ENCODE measurements at regions of chr14 and their contacts with region 1.

Region 1: GRCh38 chr14:71320107-71320733 is 413.0 kb downstream of the PCNX1 start:
- DNase-seq: peak; percentile 98
- H3K4me3 ChIP-seq: peak within 1 kb of the TSS; percentile 94 to 98 (median 96)
- H3K27ac ChIP-seq: peak within 1 kb of the TSS; percentile 99
- H3K4me1 ChIP-seq: peaks cover 7 to 34% (median 28%) of the 10 kb centered on the region in 4 donors
- H3K27me3 ChIP-seq: no peaks in the 10 kb centered on the region
- CTCF ChIP-seq: no peak
- EP300 ChIP-seq: no peak
- POLR2A ChIP-seq: peak; percentile 81

Region 2: DNA sequence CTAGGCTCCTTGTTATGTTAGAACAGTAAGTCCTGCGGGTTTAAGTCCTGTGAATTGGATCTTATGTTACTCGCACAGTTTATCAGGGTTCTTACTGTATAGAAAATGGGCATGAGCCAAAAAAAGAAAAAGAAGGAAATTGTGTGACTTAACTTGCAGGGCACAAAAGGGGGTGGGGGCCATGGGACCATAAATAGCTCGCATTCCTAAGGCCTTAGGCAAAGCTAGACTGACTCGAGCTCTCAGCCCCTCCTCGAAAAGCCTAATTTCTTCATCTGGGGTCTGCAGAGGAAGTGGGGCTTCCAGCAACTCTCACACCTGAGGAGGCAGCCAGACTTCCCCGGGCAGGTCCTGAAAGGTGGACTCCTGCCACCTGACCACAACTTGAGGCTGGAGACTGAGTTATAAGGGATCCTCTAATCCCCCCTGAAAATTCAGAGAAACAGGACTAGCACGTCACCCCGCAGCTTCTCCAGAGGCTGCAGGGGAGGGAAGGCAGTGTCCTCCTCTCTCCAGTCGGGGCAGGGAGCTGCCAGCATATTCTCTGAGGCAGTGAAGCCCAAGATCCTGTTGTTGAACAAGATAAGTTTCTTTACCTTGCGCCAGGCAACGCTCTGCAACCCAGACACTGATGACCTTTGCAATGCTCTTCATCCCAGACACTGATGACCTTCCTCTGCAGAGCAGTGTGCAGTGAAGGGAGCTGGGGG is 132.4 kb before region 1 on chr14:
- intact Hi-C with region 1: no loop called
- DNase-seq: no peak
- H3K4me3 ChIP-seq: no peak overlapping the region
- H3K27ac ChIP-seq: no peak overlapping the region
- H3K4me1 ChIP-seq: no peaks in the 10 kb centered on the region
- H3K27me3 ChIP-seq: peaks cover 0 to 4% (median 0%) of the 10 kb centered on the region in 4 donors
- CTCF ChIP-seq: no peak
- EP300 ChIP-seq: no peak
- POLR2A ChIP-seq: no peak

Region 3: GRCh38 chr14:71403656-71404055 is 83.4 kb after region 1 on chr14:
- intact Hi-C with region 1: loop called (anchors 5 kb)
- DNase-seq: no peak
- H3K4me3 ChIP-seq: no peak overlapping the region
- H3K27ac ChIP-seq: no peak overlapping the region
- H3K4me1 ChIP-seq: peaks cover 0 to 21% (median 12%) of the 10 kb centered on the region in 4 donors
- H3K27me3 ChIP-seq: no peaks in the 10 kb centered on the region
- CTCF ChIP-seq: peak in 1 of 3 experiments; percentile 10
- EP300 ChIP-seq: no peak
- POLR2A ChIP-seq: no peak

Region 4: GRCh38 chr14:71586131-71586897 is 266.1 kb after region 1 on chr14:
- intact Hi-C with region 1: loop called (anchors 5 kb)
- DNase-seq: no peak
- H3K4me3 ChIP-seq: peak overlapping the region; percentile 31 to 55 (median 42)
- H3K27ac ChIP-seq: peak overlapping the region; percentile 37 to 65 (median 56)
- H3K4me1 ChIP-seq: peaks cover 10 to 37% (median 30%) of the 10 kb centered on the region in 4 donors
- H3K27me3 ChIP-seq: no peaks in the 10 kb centered on the region
- CTCF ChIP-seq: no peak
- EP300 ChIP-seq: no peak
- POLR2A ChIP-seq: no peak

Region 5: DNA sequence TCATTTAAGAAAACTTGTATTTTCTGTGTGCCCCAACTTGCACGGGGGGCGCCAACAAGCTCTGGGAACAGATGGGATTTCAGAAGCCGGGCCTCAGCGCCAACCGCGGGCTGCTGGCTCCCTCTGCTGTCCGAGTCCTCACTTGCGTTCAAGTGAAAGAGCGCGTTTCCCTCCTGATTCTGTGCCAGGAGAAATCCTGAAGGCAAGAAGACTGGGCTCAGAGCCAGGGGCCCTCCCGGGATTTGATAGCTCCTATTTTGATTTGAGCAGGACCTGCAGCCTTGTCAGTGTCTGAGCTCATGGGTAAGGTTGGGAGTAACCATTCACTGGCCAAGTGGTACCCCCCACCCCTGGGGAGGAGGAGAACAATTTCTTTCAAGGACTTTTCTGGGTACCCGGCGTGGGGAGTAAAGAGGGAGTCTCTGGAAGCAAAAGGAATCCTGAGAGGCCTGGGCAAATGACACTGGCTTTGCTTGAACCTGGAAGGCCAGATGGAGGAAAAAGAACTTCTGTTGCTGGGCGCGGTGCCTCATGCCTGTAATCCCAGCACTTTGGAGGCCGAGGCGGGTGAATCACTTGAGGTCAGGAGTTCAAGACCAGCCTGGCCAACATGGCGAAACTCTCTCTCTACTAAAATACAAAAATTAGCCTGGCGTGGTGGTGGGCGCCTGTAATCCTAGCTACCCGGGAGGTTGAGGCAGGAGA is 433.1 kb after region 1 on chr14:
- intact Hi-C with region 1: loop called (anchors 5 kb)
- DNase-seq: peak; percentile 94
- H3K4me3 ChIP-seq: peak overlapping the region in 3 of 4 donors; percentile 14 to 41 (median 18)
- H3K27ac ChIP-seq: no peak overlapping the region
- H3K4me1 ChIP-seq: peaks cover 10 to 17% (median 14%) of the 10 kb centered on the region in 4 donors
- H3K27me3 ChIP-seq: no peaks in the 10 kb centered on the region
- CTCF ChIP-seq: peak; percentile 86 to 91 (median 87)
- EP300 ChIP-seq: no peak
- POLR2A ChIP-seq: no peak

Region 6: DNA sequence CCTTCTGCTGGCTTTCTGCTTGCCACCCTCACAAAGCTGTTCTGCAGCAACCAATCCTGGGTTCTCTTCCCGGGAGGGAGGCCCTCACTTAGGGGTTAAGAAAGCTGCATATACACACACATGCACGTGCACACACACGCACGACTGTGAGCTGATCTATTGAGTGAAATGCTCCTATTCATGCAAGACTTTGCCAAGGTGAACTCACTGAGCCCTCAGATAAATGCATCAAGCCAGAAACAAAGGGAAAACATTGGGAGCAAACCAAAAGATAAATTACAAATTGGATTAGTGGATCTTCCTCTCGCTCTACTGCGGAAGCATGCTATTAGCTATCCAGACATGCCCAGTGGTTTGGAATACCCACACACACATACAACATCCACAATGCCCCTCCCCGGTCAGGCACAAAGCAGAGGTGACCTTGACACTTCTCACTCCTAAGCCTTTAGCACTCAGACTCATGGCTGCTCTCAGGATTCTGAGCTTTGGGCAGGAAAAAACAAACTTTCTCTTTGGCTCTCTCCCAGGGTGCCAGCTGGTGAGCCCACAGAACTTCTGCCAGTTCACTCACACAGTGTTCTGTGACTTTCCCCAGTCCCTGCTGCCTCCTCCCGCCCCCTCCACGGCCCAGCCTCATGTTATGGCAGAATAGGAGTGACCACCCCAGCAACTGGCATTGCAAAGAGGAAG is 1253.7 kb after region 1 on chr14:
- intact Hi-C with region 1: no loop called
- DNase-seq: no peak
- H3K4me3 ChIP-seq: no peak overlapping the region
- H3K27ac ChIP-seq: peak overlapping the region in 1 of 4 donors; percentile 11
- H3K4me1 ChIP-seq: peaks cover 0 to 8% (median 2%) of the 10 kb centered on the region in 4 donors
- H3K27me3 ChIP-seq: no peaks in the 10 kb centered on the region
- CTCF ChIP-seq: no peak
- EP300 ChIP-seq: no peak
- POLR2A ChIP-seq: no peak